ENCODE measurements at regions of chr1 and their contacts with region 1.

Region 1: DNA sequence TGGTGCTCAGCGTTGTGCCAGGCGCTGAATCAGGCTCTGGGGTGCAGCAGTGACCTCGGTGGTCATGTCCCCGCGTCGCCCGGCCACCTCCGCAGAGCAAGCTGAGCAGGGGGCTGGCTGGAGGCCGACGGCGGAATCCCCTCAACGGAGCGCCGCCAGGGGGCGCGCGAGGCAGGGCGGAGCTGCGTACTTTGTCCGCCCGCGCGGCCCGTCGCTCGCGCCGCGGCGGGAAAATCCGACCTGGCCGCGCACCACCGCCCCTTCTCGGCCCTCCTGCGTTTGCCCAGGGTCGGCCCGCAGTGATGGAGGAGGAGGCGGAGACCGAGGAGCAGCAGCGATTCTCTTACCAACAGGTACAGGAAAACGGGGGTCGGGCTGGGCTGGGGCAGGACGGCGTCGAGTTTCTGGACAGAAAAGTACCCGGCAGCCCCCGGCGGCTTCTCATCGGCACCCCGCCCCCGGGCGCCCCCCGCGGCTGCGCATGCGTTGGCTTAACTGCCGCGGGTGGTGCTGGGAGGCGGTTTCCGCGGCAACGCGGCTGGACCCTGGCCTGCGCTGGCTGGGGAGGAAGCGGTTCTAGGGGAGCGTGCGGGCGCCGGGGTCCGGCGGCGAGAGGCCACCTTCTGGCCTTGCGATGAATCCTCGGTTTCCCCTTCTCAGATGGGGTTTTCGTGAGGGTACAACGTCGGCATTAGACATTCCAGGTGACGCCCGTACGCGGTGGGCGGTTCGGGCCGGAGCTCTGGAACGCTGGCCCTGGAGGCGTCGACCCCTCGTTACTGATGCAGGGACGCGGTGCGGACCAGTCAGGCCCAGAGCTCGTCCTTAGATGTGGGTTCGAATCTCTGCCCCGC is at the start of gene CENPS:
- DNase-seq: peak; percentile 94
- total RNA-seq, gene CENPS: 7.3 TPM

Region 2: GRCh38 chr1:9874959-9875635 is 555.3 kb before region 1 on chr1:
- intact Hi-C with region 1: loop called (anchors 10 kb)
- DNase-seq: peak; percentile 84

Region 3: DNA sequence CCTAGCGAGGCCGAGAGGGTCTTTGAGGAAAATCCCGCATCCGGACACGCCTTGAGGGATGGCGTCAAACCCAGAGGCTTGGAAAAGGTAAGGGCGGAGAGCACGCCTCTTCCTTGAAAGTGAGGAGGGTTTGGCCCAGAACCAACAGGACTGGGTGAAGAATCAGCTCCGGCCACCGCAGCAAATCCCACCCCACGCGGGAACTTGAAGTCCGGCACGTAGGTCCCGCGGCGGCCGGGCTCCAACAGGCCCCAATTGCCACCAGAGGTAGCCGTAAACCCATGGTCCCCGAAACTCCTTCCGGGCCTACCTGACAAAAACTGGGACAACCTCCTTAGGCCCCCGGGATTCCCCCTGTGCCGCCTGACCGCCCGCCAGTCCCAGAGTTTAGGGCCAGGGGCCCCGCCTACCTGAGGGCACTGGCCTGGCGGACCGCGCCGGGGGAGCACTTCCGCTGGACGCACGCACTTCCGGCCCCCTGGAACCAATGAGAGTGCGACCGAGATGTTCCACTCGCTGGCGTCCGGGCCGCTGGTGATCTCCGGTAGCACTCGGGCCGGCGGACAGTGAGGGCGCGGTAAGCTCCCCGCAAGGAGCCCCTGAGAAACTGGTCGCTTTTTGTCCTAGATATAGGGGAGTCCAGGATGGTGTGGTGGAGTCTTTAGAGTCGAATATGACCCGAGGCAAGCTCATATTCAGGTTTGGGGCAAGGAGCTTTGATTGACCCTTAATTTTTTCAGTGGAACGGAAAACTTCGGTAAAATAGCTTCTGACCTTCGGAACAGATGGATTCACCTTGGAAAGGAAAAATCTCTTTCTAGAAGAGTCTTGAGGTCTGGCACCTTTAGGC is 487.3 kb before region 1 on chr1 and contains the starts of genes LZIC and NMNAT1:
- intact Hi-C with region 1: loop called (anchors 10 kb)
- DNase-seq: peak; percentile 97
- total RNA-seq, gene LZIC: 29.7 TPM
- total RNA-seq, gene NMNAT1: 18.5 TPM

Region 4: DNA sequence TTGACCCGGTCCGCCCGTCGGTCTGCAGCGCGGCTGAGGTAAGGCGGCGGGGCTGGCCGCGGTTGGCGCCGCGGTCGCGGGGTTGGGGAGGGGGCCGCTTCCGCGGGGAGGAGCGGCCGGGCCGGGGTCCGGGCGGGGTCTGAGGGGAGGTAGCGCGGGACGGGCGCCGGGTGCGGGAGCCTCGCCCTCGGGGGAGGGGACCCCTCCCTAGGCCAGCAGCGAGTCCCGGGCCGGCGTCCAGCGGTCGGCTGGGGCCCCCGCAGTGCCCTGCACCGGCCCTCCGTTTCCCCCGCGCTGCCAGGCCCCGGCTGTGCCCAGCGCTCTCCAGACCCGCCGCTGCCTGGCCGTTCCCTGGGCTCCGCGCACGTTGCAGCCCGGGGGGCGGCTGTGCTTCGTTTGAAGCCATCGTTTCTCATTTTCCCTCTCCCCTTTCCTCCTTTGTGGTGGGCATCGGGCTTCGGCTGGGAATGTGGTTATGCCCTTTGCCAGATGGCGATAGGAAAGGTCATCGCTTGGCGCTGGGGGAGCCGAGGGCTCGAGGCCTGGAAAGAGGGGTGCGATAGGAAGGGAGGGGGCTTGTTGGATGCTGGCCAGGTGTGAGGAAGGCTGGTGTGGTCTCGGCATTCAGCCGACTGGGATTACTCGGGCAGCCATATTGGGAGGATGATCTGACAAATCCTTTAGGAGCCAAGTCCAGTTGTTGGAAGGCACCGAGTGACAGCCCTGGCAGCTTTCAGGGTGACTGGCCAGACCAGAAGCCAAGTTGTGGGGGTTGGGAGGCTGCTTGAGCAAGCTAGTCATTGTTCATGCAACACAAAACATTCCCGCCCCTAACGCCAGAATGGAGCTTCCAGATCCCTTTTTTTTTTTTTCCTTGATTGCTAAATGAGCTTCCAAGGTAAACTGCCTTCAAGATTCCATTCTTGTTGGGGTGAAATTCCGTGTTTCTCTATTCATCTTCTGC is 219.3 kb before region 1 on chr1:
- intact Hi-C with region 1: no loop called
- DNase-seq: peak; percentile 95

Region 5: DNA sequence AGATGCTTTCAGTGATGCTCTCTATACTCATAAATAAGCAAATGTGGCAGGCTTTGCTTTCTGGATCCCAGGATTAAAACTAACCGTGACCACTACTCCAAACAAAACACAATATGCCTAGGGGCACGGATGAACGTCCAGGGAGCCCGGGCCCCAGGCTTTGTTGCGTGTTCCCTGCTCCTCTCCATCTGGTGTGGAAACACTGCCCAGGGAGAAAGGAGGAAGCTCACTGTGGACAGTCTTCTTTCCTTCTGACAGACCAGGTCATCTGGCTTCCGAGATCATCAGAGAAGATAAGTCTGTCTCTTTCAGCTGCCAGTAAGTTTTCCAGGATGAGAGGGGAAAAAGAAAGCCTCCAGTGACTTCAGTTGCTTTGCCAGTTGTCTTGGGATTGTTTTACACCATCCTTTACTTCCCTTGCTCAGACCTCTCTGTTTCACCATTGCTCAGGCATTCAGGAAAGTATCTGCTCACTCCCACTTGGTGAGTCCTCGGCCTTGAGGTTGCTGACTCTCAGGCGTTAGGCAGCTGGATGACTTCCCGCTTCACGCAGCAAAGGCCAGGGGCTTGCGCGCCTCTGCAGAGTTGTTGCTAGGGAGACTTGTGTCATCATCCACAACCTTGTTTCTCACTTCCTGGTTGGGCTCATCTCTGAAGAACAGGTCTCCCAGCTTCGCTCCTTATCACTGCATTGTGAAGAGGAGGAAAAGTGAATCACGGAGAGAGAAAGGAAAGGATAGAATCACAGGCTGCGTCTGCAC is 52.2 kb before region 1 on chr1:
- intact Hi-C with region 1: loop called (anchors 1 kb)
- DNase-seq: peak; percentile 87

Region 6: DNA sequence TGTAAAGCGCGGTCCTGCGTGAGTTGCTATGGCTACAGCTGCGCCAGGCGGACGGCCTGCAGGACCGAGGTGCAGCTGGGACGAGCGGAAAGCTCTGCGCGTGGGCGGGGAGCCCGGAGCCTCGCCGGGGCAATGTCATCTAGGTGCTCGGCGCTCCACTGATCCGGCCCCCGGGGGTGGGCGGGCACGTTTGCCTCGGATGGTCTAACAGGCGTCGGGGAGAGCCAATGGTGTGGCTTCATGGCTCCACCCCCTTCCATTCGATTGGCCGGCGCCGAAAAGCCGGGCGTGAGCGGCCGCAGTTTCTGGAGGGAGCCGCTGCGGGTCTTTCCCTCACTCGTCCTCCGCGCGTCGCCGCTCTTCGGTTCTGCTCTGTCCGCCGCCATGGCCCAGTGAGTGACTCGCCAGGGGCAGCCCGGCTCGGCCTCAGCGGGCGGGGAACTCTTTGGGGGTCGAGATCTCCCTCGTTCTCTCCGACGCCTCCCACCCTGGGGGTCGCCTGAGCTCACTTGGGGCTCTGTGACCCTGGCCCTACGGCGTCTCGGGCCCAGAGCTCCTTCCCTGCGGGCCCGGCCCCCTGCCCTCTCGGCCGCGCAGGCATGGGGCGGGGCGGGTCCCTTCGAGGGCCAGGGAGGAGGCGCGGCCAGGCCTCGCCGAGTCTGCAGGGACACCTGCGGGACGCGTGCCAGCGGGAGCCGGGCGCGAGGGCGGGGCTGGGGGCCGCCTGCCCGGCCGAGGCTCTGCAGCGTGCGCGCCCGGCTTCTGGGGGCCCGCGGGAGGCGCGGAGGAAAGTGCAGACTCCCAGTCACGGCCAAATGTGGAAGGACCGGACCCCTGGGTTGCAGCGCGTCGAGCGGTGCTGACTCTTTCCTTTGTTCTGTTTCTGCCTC is 31.5 kb before region 1 on chr1 and contains the start of gene PGD:
- intact Hi-C with region 1: loop called (anchors 2 kb)
- DNase-seq: peak; percentile 100
- total RNA-seq, gene PGD: 26.4 TPM

Region 7: GRCh38 chr1:10474613-10475507 is 44.4 kb after region 1 on chr1 and contains the start of gene PEX14:
- intact Hi-C with region 1: loop called (anchors 2 kb)
- DNase-seq: peak; percentile 90
- total RNA-seq, gene PEX14: 17.7 TPM

Region 8: DNA sequence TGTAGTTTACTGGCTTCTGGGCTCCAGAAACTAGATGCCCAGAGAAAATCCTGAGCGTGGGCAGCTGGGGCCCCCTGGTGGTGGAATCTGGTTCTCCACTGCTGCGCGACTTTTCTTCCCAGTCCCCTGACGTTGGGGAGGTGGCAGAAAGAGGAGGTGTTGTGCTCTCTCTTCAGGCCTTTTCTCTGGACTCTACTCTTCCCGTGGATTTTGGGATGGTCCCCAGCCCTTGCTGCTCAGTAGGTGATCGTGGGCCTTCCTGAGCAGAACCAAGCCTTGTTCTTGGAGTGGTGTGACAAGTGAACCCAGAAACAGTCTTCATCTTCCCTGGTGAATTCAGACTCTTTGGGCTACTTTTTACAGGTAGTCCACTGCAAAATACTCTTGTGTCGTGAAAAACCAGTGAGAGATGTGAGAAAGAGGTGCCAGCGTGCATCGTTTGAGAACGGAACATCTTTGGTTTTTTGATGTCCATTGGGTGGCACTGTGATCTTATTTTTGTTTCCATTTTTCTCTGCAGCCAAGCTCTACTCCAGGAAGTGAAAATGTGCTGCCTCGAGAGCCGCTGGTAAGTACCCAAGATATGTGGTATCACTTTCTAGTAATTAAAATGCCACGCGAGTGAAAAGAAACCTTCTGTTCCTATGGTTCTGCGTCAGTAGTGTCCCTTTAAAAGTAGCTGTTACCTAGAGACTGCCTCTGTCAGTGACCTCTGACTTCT is 64.5 kb after region 1 on chr1:
- intact Hi-C with region 1: loop called (anchors 2 kb)
- DNase-seq: peak; percentile 87

Measured in cardiac septum (tissue), 1 donor.